Mammary epithelial cell (primary cell): ENCODE measurements at regions of chr10 and their contacts with region 1.

Region 1: GRCh38 chr10:103828107-103828506 is 27.3 kb downstream of the SH3PXD2A start:
- DNase-seq: peak; percentile 96
- H3K4me3 ChIP-seq: no peak overlapping the region
- H3K27ac ChIP-seq: peak overlapping the region; percentile 65
- H3K4me1 ChIP-seq: peaks cover 80% of the 10 kb centered on the region
- H3K27me3 ChIP-seq: no peaks in the 10 kb centered on the region
- CTCF ChIP-seq: no peak

Region 2: DNA sequence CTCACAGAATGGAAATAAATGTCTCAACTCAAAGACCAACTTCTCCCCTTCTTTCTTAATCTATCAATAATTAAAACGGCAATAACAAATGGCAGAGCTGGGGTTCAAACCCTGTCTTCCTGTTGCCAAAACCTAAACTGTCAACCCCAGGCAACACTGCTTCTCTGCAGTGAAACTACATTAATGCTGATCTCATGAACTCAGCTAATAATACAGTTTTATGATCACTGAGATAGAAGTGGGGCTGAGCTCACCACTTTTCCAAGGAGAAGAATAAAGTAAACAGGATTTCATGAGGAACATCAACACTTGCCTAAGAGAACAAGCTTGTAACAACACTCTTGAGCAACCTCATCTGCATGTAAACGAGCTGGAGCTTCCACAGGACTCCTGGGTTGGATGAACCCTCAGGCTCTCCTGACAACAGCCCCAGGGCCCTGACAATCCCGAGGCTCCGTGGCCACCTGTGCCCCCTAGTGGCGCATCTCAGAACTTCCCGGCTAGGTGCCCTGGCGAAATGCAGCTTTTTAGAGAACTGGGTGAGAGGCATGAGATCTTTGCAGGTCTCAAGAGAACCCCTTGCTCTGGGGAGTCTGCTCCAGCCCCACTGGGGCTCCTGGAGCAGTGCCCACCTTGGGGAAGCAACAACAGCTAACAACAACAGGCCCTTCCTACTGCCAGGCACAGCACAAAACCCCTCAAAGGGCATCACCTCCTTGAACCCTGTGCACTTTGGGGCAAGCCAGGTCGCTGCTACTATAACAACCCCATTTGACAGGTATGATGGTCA is 142.0 kb before region 1 on chr10:
- CTCF ChIA-PET with region 1: no interaction called
- dilution Hi-C with region 1: no loop called
- in situ Hi-C with region 1: no loop called
- intact Hi-C with region 1: no loop called
- DNase-seq: no peak
- H3K4me3 ChIP-seq: no peak overlapping the region
- H3K27ac ChIP-seq: no peak overlapping the region
- H3K4me1 ChIP-seq: peaks cover 7% of the 10 kb centered on the region
- H3K27me3 ChIP-seq: no peaks in the 10 kb centered on the region
- CTCF ChIP-seq: peak; percentile 85 to 93

Region 3: DNA sequence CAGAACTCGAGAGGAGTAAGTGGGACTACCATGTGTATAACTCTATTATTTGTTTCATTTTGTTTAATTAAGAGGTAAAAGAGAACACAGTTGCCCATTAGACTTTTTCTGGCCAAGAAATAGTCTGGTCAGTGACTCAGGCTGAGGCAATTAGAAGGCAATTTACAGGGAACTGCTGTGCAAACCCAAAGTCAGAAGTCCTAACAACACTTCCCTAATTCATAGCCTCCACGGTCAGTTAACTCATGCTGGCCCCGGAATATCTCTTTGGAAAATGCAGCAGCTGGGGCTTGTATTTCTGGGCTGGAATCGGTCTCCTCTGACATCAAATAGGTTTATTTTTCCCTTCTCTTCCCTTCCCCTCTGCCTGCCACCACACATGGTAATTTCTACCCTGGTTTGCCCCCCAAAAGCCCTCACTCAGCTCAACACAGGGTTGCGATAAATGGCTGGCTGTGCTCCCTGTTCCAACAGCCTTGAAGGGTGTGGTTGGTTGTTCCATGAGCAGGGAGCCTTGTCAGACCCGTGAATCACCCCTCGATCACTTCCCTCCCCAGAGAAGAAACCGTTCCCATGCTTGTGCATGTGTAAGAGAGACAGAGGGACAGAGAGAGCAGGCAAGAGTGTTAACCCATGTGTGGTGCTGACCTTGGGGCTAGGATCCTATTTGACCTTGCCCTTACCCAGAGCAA is 21.9 kb after region 1 on chr10:
- CTCF ChIA-PET with region 1: no interaction called
- dilution Hi-C with region 1: no loop called
- in situ Hi-C with region 1: no loop called
- intact Hi-C with region 1: loop called (anchors 1 kb)
- DNase-seq: peak; percentile 89
- H3K4me3 ChIP-seq: peak overlapping the region in 2 of 3 experiments; percentile 8 to 12
- H3K27ac ChIP-seq: peak overlapping the region; percentile 78
- H3K4me1 ChIP-seq: peaks cover 55% of the 10 kb centered on the region
- H3K27me3 ChIP-seq: no peaks in the 10 kb centered on the region
- CTCF ChIP-seq: no peak